ENCODE measurements at regions of chr15 and their contacts with region 1.

Region 1: DNA sequence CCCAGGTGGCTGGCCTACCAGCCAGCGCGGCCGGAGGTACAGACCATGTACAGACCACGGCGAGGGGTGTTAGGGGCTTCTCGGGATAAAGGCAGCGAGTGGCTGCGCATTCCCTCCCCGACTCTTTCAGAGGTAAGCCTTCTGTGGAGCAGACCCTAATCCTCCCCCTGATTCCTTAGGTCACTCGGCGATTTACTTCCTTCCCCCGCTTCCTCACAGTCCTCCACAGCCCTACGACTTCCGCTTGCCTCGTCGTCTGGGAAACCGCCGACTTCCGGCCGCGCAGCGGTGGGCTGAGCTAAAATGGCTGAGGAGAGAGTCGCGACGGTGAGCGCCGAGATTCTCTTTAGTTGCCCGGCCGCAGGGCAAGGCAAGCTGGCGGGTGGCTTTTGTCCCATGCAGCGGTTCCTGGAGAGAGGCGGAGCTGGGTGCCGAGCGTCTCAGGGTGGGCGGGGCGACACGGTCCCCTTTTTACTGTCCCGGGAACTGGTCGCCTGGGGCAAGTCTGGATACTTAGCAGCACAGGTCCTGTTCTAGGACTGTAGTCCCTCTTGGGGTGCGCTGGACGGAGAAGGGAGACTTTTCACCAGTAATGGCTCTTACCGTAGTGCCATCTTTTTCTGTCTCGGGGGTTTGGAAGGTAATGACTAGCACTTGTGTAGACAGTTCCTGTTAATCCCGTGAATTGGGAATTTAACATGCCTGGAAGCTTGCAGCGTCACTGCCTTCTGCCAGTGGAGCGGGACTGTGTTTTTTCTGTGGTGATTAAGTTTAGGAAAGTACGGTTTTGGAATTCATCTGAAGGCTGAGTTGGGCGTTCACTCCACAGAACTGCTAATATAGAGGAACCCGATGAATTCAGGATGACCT is at the starts of genes BBS4 and HIGD2B:
- DNase-seq: peak; percentile 94 to 96
- ATAC-seq: peak; percentile 98
- H3K4me3 ChIP-seq: peak within 1 kb of the TSS; percentile 16 to 54
- H3K27ac ChIP-seq: peak within 1 kb of the TSS; percentile 25 to 85
- H3K4me1 ChIP-seq: peaks cover 0 to 3% of the 10 kb centered on the region in 2 donors
- H3K27me3 ChIP-seq: no peaks in the 10 kb centered on the region
- total RNA-seq, gene BBS4: 16.5 to 26.6 TPM
- total RNA-seq, gene HIGD2B: not detected

Region 2: GRCh38 chr15:72473614-72474465 is 212.3 kb before region 1 on chr15 and contains the start of gene ARIH1:
- intact Hi-C with region 1: loop called in 1 of 2 experiments (anchors 10 kb)
- DNase-seq: peak; percentile 98 to 99
- ATAC-seq: peak; percentile 99
- H3K4me3 ChIP-seq: peak within 1 kb of the TSS; percentile 64 to 76
- H3K27ac ChIP-seq: peak within 1 kb of the TSS; percentile 94 to 98
- H3K4me1 ChIP-seq: peaks cover 0 to 3% of the 10 kb centered on the region in 2 donors
- H3K27me3 ChIP-seq: no peaks in the 10 kb centered on the region
- total RNA-seq, gene ARIH1: 162 to 165 TPM

Measured in aorta (tissue), 5 donors.